Activated CD4-positive, alpha-beta T cell treated with anti-CD3 and anti-CD28 coated beads for 36 hours (primary cell): ENCODE measurements at regions of chr3 and their contacts with region 1.

Region 1: GRCh38 chr3:50136714-50137405 is 18.3 kb upstream of the SEMA3F start:
- DNase-seq: no peak
- ATAC-seq: no peak
- H3K4me3 Mint-ChIP-seq: no peak overlapping the region
- H3K27ac Mint-ChIP-seq: no peak overlapping the region
- H3K4me1 Mint-ChIP-seq: peaks cover 11% of the 10 kb centered on the region
- H3K27me3 Mint-ChIP-seq: no peaks in the 10 kb centered on the region

Region 2: GRCh38 chr3:49786241-49786958 is 350.5 kb before region 1 on chr3 and contains the start of gene IP6K1:
- CTCF ChIA-PET with region 1: no interaction called
- POLR2A ChIA-PET with region 1: no interaction called
- intact Hi-C with region 1: no loop called
- DNase-seq: peak; percentile 100
- ATAC-seq: peak; percentile 100
- H3K4me3 Mint-ChIP-seq: peak within 1 kb of the TSS; percentile 90
- H3K27ac Mint-ChIP-seq: peak within 1 kb of the TSS; percentile 96
- H3K4me1 Mint-ChIP-seq: peaks cover 37% of the 10 kb centered on the region
- H3K27me3 Mint-ChIP-seq: no peaks in the 10 kb centered on the region
- total RNA-seq, gene IP6K1: 29.1 to 31.0 TPM

Region 3: DNA sequence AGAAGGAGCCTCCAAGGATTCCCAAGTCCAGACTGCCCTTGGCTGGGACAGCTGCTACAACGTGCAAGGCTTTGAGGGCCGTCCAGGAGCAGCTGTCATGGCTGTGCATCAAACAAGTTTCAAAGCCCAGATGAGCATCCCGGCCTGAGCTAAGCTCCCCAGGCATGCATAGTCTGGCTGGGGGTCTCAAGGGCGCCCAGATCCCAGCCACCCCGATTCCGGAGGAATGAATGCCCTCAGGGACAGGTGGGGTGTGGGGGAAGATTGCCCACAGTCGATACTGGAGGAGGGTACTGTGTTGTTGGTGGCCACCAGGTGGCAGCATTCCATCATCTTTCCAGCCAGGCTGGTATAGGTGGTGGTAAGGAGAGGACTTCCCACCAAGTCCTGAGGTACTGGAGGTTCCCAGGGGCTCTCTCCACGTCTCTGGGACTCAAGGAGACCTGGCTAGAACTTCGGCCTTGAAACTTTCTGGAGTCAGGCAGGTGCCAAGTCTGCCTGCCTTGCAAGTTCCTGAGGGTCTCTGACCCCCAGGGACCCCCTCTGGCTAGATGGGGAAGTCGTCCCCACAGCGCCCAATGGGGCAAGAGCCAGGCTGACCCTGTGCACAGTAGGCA is 15.3 kb before region 1 on chr3:
- CTCF ChIA-PET with region 1: interaction called, 20 read pairs
- POLR2A ChIA-PET with region 1: interaction called, 5 read pairs
- intact Hi-C with region 1: no loop called
- DNase-seq: peak; percentile 87
- ATAC-seq: peak; percentile 93
- H3K4me3 Mint-ChIP-seq: no peak overlapping the region
- H3K27ac Mint-ChIP-seq: no peak overlapping the region
- H3K4me1 Mint-ChIP-seq: no peaks in the 10 kb centered on the region
- H3K27me3 Mint-ChIP-seq: no peaks in the 10 kb centered on the region

Region 4: DNA sequence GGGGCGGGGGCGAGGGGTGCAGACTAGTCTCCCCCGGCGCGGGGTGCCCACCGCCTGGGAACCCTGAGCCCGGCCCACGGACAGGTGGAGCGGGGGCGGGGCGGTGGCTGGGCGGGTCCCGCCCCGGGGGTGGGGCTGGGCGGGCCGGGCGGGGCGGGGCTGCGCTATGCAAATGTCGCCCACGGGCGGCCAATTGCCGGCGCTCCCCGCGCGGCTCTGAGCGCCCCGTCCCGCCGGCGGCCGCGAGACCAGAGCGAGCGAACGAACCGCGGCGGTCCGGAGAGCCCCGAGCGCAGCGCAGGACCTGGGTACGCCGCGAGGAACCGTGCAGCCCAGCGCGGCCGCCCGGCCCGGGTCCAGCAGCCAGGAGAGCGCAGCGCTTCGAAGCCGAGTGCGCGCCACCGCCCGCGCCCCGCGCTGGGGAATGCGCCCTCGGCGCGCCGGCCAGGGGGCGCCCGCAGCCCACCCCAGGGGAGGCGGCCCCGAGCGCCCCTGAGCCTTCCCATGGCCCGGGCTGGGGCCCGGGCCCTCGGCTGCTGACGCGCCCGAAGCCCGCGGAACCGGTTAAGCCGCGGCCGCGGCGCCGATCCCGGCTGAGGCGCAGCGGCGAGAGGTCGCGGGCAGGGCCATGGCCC is 18.1 kb after region 1 on chr3 and contains the start of gene SEMA3F:
- CTCF ChIA-PET with region 1: no interaction called
- POLR2A ChIA-PET with region 1: no interaction called
- intact Hi-C with region 1: no loop called
- DNase-seq: peak; percentile 79
- ATAC-seq: peak; percentile 89
- H3K4me3 Mint-ChIP-seq: peak within 1 kb of the TSS; percentile 60
- H3K27ac Mint-ChIP-seq: no peak within 1 kb of the TSS
- H3K4me1 Mint-ChIP-seq: peaks cover 8% of the 10 kb centered on the region
- H3K27me3 Mint-ChIP-seq: peaks cover 29% of the 10 kb centered on the region
- total RNA-seq, gene SEMA3F: 0.25 to 0.46 TPM

Region 5: GRCh38 chr3:50530001-50530970 is 393.4 kb after region 1 on chr3:
- CTCF ChIA-PET with region 1: no interaction called
- POLR2A ChIA-PET with region 1: no interaction called
- intact Hi-C with region 1: no loop called
- DNase-seq: no peak
- ATAC-seq: no peak
- H3K4me3 Mint-ChIP-seq: no peak overlapping the region
- H3K27ac Mint-ChIP-seq: no peak overlapping the region
- H3K4me1 Mint-ChIP-seq: peaks cover 4% of the 10 kb centered on the region
- H3K27me3 Mint-ChIP-seq: peaks cover 21% of the 10 kb centered on the region